ENCODE measurements at regions of chr6 and their contacts with region 1.

Region 1: GRCh38 chr6:33771146-33772081 is 17.5 kb downstream of the LEMD2 start:
- DNase-seq: peak; percentile 39 to 72 (median 64)
- ATAC-seq: peak; percentile 85
- H3K4me3 ChIP-seq: no peak overlapping the region
- H3K4me3 Mint-ChIP-seq: no peak overlapping the region
- H3K27ac ChIP-seq: no peak overlapping the region
- H3K27ac Mint-ChIP-seq: peak overlapping the region in 6 of 9 donors; percentile 2 to 89 (median 68)
- H3K4me1 ChIP-seq: no peaks in the 10 kb centered on the region
- H3K4me1 Mint-ChIP-seq: peaks cover 0 to 23% (median 13%) of the 10 kb centered on the region in 7 donors
- H3K27me3 ChIP-seq: no peaks in the 10 kb centered on the region
- H3K27me3 Mint-ChIP-seq: peaks cover 0 to 11% (median 3%) of the 10 kb centered on the region in 5 donors

Region 2: GRCh38 chr6:33860706-33861474 is 89.5 kb after region 1 on chr6:
- CTCF ChIA-PET with region 1: no interaction called
- POLR2A ChIA-PET with region 1: no interaction called
- intact Hi-C with region 1: loop called in 1 of 2 experiments (anchors 5 kb)
- DNase-seq: peak in 7 of 9 donors; percentile 20 to 68 (median 54)
- ATAC-seq: peak; percentile 30
- H3K4me3 ChIP-seq: no peak overlapping the region
- H3K4me3 Mint-ChIP-seq: peak overlapping the region in 9 of 10 donors; percentile 19 to 63 (median 40)
- H3K27ac ChIP-seq: no peak overlapping the region
- H3K27ac Mint-ChIP-seq: peak overlapping the region in 5 of 9 donors; percentile 12 to 82 (median 35)
- H3K4me1 ChIP-seq: peaks cover 44 to 54% of the 10 kb centered on the region in 2 donors
- H3K4me1 Mint-ChIP-seq: peaks cover 31 to 67% (median 57%) of the 10 kb centered on the region in 7 donors
- H3K27me3 ChIP-seq: no peaks in the 10 kb centered on the region
- H3K27me3 Mint-ChIP-seq: peaks cover 0 to 11% (median 9%) of the 10 kb centered on the region in 5 donors

Region 3: GRCh38 chr6:34027445-34027936 is 256.1 kb after region 1 on chr6:
- CTCF ChIA-PET with region 1: interaction called, 124 read pairs
- POLR2A ChIA-PET with region 1: interaction called, 4 read pairs
- intact Hi-C with region 1: loop called (anchors 1 kb)
- DNase-seq: peak; percentile 36 to 78 (median 64)
- ATAC-seq: peak; percentile 66
- H3K4me3 ChIP-seq: no peak overlapping the region
- H3K4me3 Mint-ChIP-seq: no peak overlapping the region
- H3K27ac ChIP-seq: no peak overlapping the region
- H3K27ac Mint-ChIP-seq: no peak overlapping the region
- H3K4me1 ChIP-seq: no peaks in the 10 kb centered on the region
- H3K4me1 Mint-ChIP-seq: peaks cover 0 to 4% (median 0%) of the 10 kb centered on the region in 7 donors
- H3K27me3 ChIP-seq: no peaks in the 10 kb centered on the region
- H3K27me3 Mint-ChIP-seq: peaks cover 0 to 4% (median 0%) of the 10 kb centered on the region in 5 donors

Region 4: GRCh38 chr6:34154668-34155447 is 383.4 kb after region 1 on chr6:
- CTCF ChIA-PET with region 1: interaction called, 7 read pairs
- POLR2A ChIA-PET with region 1: interaction called, 3 read pairs
- intact Hi-C with region 1: loop called (anchors 1 kb)
- DNase-seq: peak; percentile 28 to 80 (median 70)
- ATAC-seq: peak; percentile 91
- H3K4me3 ChIP-seq: peak overlapping the region; percentile 37
- H3K4me3 Mint-ChIP-seq: peak overlapping the region in 8 of 10 donors; percentile 29 to 74 (median 54)
- H3K27ac ChIP-seq: no peak overlapping the region
- H3K27ac Mint-ChIP-seq: no peak overlapping the region
- H3K4me1 ChIP-seq: peaks cover 3 to 9% of the 10 kb centered on the region in 2 donors
- H3K4me1 Mint-ChIP-seq: peaks cover 0 to 10% (median 5%) of the 10 kb centered on the region in 7 donors
- H3K27me3 ChIP-seq: peaks cover 2 to 6% of the 10 kb centered on the region in 2 donors
- H3K27me3 Mint-ChIP-seq: peaks cover 25 to 82% (median 34%) of the 10 kb centered on the region in 5 donors